Mammary epithelial cell (primary cell): ENCODE measurements at regions of chr5 and their contacts with region 1.

Region 1: DNA sequence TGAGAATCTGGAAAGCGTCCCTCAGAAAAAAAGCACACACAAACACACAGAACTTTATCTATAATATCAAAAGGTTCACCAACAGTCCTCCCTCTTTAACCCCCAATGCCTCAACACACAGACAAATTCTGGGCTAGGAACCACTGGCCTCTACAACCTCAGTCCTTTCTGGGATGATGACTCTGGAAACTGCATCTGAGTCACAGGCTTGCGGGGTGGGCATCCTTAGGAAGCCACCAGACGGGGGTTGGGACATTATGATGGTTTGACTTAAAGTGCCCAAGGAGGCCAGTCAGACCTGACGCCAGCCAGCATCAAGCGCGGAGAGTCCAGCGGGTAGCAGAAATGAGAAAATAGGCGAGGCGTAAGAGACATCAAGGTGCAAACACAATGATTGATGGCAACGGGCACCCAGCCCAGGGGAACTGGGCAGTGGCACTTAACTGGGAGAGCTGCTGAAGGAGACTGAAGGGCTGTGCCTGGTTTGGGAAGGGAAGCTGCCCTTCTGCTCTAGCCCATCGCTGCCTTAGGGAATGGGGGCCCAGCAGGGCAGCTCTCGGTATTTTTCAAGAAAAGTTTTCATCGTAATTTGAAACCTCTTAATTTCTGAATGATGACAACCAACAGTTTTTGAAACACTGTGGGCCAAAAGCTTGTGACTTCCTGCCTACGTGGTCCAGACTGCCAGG is 20.7 kb downstream of the SPRY4 start:
- DNase-seq: no peak
- H3K4me3 ChIP-seq: no peak overlapping the region
- H3K27ac ChIP-seq: no peak overlapping the region
- H3K4me1 ChIP-seq: no peaks in the 10 kb centered on the region
- H3K27me3 ChIP-seq: no peaks in the 10 kb centered on the region
- CTCF ChIP-seq: no peak

Region 2: GRCh38 chr5:142000703-142001484 is 303.3 kb before region 1 on chr5:
- CTCF ChIA-PET with region 1: no interaction called
- dilution Hi-C with region 1: no loop called
- in situ Hi-C with region 1: no loop called
- intact Hi-C with region 1: no loop called
- DNase-seq: no peak
- H3K4me3 ChIP-seq: no peak overlapping the region
- H3K27ac ChIP-seq: no peak overlapping the region
- H3K4me1 ChIP-seq: peaks cover 17% of the 10 kb centered on the region
- H3K27me3 ChIP-seq: no peaks in the 10 kb centered on the region
- CTCF ChIP-seq: peak; percentile 27 to 40

Region 3: DNA sequence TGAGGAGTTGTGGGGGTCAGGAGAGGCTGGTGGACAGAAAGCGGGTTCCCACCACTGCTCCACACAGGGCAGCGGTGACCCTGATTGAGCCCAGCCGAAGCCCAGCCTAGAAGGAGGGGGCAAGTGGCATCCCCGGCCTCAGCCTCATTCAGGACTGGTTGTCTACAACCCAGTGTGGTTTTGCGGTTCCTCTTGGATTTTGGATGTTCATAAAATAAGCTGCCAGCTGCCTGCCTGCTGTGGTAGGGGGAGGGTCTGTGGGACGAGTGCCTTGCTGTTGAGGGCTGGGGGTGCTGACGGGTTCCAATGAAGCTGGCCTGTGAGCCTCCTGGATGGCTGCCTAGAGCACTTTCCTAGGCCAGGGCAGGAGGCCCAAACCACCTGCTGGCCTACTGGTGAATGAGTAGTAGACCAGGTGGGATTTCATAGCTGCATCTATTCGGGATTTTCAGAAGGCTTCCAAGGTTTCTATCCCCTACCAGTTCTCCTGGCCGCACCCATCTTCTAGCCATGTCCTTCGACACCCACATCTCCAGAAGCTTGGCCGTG is 93.2 kb before region 1 on chr5:
- CTCF ChIA-PET with region 1: no interaction called
- dilution Hi-C with region 1: loop called (anchors 5 kb)
- in situ Hi-C with region 1: no loop called
- intact Hi-C with region 1: no loop called
- DNase-seq: no peak
- H3K4me3 ChIP-seq: no peak overlapping the region
- H3K27ac ChIP-seq: no peak overlapping the region
- H3K4me1 ChIP-seq: peaks cover 7% of the 10 kb centered on the region
- H3K27me3 ChIP-seq: no peaks in the 10 kb centered on the region
- CTCF ChIP-seq: no peak

Region 4: GRCh38 chr5:142334538-142334937 is 30.4 kb after region 1 on chr5:
- CTCF ChIA-PET with region 1: no interaction called
- dilution Hi-C with region 1: no loop called
- in situ Hi-C with region 1: no loop called
- intact Hi-C with region 1: no loop called
- DNase-seq: no peak
- H3K4me3 ChIP-seq: no peak overlapping the region
- H3K27ac ChIP-seq: no peak overlapping the region
- H3K4me1 ChIP-seq: no peaks in the 10 kb centered on the region
- H3K27me3 ChIP-seq: no peaks in the 10 kb centered on the region
- CTCF ChIP-seq: no peak

Region 5: DNA sequence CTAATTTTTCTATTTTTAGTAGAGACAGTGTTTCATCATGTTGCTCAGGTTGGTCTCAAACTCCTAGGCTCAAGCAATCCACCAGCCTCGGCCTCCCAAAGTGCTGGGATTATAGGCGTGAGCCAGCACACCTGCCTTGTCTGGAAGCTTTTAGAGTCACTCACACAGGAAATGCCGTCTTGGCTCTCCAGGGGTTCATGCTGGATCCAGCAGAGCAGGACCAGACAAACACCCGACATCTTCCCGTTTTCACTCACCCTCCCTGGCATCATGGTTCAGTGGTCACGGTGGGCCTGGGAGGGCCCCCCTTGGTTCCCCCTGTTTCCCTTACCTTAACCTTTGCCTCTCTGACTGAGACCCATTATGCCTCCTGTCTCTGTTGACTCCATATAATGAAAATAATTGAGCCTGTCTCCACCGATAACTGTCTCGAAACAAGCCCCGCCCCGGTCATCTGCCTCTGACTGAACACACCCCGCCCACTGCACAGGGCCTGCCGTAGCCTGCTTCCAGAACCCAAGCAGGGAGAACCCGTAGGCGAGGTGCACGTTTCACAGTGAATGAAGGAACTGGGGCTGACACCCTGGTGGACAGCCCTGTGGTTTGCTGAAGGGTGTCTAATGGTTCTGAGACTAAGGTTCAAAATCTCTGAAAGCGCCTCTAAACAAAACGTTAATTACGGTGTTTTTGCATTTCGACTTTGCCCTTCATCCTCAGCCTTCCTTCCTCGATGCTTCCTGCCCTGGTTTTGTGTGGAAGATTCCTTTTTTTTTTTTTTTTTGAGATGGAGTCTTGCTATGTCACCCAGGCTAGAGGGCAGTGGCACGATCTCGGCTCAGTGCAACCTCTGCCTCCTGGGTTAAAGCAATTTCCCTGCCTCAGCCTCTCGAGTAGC is 60.3 kb after region 1 on chr5:
- CTCF ChIA-PET with region 1: no interaction called
- dilution Hi-C with region 1: loop called (anchors 5 kb)
- in situ Hi-C with region 1: no loop called
- intact Hi-C with region 1: no loop called
- DNase-seq: peak; percentile 88
- H3K4me3 ChIP-seq: peak overlapping the region; percentile 43 to 45 (median 44)
- H3K27ac ChIP-seq: peak overlapping the region; percentile 80
- H3K4me1 ChIP-seq: peaks cover 28% of the 10 kb centered on the region
- H3K27me3 ChIP-seq: no peaks in the 10 kb centered on the region
- CTCF ChIP-seq: peak in 1 of 2 donors; percentile 40

Region 6: DNA sequence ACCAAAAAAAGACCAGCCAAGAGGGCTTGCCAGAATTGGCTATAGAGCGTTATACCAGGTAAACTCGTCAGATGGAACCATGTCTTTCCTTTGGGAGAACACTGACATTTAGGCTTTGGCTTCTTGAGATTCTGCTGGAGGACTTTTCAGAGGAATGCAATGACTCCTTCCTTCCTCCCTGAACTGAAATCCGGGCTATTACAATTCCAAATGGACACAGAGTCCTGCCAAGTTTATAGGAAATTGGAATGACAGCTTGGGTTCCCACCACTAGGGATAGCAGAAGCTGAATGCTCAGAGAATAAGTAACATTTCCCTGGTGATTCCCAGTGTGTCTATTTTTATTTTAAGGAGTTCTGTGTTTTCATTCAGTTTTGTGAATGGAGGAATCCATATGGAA is 238.7 kb after region 1 on chr5:
- CTCF ChIA-PET with region 1: no interaction called
- dilution Hi-C with region 1: loop called (anchors 5 kb)
- in situ Hi-C with region 1: no loop called
- intact Hi-C with region 1: no loop called
- DNase-seq: no peak
- H3K4me3 ChIP-seq: no peak overlapping the region
- H3K27ac ChIP-seq: no peak overlapping the region
- H3K4me1 ChIP-seq: no peaks in the 10 kb centered on the region
- H3K27me3 ChIP-seq: no peaks in the 10 kb centered on the region
- CTCF ChIP-seq: no peak

Region 7: DNA sequence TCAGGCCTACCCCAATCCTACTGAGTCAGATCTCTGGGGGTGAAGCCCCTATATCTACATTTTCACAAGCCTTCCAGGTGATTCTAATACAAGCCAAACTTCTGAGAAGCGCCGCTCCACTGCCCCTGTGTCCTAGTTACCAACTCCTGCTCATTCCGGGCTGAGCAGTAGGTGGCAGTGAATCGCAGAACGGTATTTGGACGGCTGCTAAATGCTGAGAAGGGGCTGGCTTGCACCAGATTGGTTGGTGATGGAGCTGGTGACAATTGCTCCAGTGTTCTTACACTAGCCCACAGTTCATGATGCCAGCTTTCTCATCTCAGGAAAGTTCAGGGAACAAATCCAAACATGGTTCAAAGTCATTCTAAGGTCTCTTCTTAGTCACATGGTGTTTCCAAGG is 412.8 kb after region 1 on chr5:
- CTCF ChIA-PET with region 1: no interaction called
- dilution Hi-C with region 1: no loop called
- in situ Hi-C with region 1: no loop called
- intact Hi-C with region 1: no loop called
- DNase-seq: peak; percentile 66
- H3K4me3 ChIP-seq: no peak overlapping the region
- H3K27ac ChIP-seq: no peak overlapping the region
- H3K4me1 ChIP-seq: peaks cover 25% of the 10 kb centered on the region
- H3K27me3 ChIP-seq: no peaks in the 10 kb centered on the region
- CTCF ChIP-seq: peak; percentile 61 to 65